Left cardiac atrium (tissue), 4 donors: ENCODE measurements at regions of chr3 and their contacts with region 1.

Region 1: DNA sequence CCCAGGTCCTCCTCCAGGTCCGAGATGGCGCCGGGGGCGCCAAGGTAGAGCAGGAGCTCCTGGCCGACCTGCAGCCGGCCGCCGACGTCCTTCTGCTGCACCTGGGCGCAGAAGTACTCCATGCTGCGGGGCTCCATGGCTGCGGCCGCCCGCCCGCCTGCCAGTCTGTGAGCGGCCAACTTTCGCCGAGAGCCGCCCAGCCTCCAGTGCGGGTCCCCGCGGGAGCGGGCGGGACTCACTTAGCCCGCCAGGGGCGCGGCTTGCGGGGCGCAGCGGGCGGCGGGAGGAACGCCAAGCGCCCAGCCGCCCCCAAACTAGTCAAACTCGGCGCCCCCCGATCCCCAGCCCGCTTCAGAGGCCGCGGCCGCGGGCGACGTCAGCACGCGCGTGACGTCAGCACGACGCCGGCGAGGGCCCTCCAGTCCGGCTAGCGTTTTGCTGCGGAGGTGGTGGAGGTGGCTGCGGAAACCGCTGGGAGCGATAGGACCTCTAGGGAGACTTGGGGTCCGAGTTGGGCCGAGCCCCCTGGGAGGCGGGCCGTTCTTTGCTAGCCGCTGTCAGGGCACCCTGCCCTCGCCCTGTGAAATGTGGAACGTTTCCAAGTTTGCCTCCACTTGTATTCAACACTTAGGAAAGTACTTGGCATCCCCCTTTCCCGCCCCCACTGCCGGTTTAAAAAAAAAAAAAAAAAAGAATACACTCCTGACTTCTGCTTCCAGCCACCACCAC is at the start of gene CLASP2:
- DNase-seq: peak; percentile 92
- ATAC-seq: peak; percentile 97 to 98
- total RNA-seq, gene CLASP2: 52.9 to 61.4 TPM

Region 2: DNA sequence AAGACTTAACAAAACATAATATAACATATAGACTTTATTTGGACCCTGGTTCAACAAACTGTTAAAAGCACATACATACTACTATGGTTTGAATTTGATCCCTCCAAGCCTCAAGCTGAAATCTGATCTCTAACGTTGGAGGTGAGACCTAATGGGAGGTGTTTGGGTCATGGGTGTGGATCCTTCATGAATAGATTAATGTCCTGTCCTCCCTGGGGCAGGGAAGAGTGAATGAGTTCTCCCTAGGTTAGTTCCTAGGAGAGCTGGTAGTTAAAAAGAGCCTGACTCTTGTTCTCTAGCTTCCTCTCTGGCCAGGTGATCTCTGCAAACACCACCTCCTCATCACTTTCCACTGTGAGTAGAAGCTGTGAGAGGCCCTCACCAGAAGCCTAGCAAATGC is 36.4 kb before region 1 on chr3:
- intact Hi-C with region 1: no loop called
- DNase-seq: no peak
- ATAC-seq: no peak

Region 3: DNA sequence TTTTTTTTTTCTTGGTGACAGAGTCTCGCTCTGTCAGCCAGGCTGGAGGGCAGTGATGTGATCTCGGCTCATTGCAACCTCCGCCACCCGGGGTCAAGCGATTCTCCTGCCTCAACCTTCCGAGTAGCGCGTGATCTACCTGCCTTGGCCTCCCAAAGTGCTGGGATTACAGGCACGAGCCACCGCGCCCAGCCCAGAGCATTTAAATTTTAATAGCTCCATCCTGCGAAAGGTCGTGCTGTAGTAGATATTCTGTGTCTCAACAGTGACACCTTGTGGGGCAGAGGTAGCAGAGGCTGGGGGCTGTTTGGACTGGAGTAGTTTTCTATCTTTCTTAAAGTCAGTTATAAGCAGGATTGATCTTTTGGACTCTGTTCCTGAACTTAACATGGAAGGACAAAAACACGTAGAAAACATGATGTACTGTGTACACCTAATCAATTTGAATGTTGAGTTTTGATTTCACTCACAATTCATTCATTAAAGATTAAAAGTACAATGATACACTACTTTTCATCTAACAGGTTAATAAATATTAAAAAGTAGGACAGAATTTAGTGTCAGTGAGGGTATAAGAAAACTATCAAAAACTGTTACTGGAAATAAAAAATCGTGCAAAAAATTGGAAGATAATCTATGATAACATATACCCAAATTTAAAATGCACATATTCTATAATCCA is 69.4 kb after region 1 on chr3:
- intact Hi-C with region 1: loop called in 1 of 2 experiments (anchors 5 kb)
- DNase-seq: peak; percentile 41
- ATAC-seq: peak; percentile 89 to 93